RWPE1 (cell line): ENCODE measurements at regions of chr12 and their contacts with region 1.

Region 1: DNA sequence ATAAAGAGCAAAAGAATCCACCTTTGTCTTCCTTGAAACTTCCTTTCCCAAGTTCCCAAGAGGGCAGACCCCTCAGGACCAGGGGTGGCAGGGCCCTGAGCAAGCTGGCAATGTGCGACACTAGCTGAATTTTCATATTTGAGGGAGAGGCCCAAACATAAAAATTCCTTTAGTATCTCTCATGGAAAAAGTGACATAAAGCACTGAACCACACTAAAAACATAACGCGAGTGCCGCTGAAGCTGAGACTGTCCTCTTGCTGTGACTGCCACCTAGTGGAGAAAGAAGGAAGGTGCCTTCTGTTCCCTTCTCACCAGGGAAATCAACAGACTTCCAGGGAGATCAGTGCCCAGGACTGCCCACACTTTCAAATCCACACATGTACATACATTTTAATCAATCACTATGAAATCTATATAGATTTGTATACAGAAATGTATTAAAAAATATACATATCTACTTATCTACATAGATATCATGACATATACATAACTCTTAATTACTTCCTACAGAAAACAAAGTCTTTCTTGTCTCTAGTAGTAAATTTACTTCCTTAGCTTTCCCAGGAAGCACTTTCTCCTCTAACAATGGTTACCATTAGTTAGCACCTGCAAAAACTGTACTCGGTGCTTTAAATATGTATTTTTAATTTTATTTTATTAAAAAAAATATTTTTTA is 53.8 kb downstream of the SSH1 start:
- DNase-seq: peak; percentile 77
- H3K27ac ChIP-seq: peak overlapping the region; percentile 75; the same call in 1 of the 2 replicates
- CTCF ChIP-seq: peak; percentile 93

Region 2: DNA sequence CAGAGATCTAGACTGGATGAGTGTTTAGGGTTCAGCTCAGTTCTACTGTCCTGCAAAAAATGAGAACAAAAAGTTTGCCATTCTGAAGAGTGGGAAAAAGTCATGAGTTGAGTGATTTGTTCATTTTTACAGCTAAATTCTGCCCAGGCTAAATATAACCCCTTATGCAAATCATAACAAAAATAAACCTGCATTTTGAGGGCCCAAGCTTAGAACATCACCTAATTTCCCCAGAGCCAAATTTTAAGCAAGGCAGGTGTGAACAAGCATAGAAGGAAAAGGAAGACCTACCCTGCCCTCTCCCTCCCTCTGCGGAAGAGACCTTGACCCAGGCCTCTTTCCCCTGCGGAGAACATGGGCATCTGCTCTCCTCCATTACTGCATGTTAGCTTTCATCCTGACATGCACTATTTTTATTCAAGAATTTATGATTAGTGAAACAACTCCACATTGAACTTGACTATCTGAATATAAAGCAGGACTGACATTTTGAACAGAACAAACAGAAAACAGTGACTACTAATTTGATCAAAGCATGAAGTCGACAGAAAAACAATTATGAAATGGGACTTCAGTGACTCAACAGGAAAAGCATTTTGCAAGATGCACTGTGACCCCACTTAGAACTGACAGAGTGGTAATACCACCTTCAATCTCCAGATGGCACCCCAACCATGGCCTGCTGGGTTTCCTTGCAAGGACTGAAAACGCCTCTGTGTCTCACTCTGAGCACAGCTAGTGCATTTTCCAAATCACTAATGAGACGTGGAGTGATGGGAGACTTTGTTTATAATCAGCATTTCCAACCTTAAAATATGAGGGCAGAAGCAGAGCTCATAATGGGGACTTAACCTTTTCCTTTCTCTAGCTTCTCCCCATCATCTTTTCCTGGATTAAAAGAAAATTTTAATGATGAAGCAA is 139.0 kb before region 1 on chr12:
- CTCF ChIA-PET with region 1: interaction called, 18 read pairs
- POLR2A ChIA-PET with region 1: no interaction called
- DNase-seq: peak; percentile 86
- H3K27ac ChIP-seq: no peak overlapping the region
- CTCF ChIP-seq: peak; percentile 93

Region 3: DNA sequence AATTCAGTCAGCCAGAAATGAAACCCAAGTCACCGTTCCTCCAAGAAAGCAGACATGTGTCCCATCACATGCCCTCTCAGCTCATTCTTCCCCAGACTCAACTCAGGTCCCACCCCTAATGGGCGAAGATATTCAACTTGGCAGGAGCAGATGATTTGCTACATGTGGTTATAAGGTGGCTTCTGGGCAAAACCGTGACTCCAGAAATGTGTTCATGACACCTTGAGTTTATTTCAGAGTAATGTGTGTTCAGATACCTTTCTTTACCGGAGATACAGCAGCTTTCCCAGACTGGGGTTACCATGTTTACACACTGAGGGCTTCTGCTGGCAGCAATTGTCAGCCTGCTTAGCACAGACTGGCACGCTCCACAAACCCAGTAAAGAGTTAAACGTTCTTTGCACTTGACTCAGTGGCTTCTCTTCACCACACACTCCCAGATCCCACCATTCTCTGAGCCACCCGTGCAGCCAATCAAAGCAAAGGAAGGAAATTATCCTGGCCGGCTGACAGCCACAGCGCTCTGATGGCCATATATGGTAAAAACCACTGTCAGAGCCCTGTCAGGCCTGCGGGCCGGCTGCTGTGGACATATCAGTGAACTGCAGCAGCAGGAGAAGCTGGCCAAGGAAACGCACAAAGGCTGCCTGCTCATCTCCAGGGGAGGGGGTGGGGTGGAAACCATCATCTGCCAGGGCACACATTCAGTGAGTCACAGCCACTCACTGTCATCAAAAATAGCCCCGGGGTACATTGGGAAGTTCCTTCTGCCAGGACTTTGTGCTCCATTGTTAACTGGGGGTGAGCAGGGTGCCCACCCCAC is 112.2 kb before region 1 on chr12:
- CTCF ChIA-PET with region 1: interaction called, 18 read pairs
- POLR2A ChIA-PET with region 1: interaction called, 3 read pairs
- DNase-seq: peak; percentile 92
- H3K27ac ChIP-seq: peak overlapping the region; percentile 97
- CTCF ChIP-seq: no peak; the same call in 1 of the 2 replicates

Region 4: DNA sequence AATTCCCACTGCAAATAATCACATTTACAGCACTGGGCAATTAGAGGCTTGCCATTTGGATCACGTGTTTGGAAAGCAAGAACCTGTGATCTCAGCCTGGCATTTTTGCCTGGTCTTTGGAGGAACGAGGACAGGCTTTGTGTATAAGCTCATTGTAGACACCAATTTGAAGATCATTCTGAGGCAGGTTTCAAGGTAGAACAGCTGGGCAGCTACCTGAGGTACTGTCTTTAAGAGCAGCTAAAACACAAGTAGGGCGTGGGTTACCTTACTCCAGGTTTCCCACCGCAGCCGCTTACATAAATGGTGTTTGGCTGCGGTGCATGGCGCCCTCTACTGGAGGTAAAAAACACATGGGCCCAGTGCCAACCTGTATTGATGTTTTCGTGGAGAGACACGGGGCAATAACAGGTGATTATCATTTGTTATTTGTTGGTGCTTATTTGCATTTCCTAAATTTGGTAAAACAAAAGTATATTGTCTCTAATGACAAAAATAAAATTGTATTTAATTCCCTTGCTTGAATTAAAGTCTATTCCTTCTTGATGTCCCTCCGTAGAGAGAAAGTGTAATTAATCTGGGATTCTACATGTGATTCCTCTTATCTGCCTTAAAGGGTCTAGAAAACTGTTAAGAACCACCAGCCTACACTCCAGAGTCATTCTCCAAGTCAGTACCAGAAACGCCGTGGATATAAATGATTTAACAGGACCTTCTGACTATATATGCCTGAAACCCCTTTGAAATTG is 147.6 kb after region 1 on chr12:
- CTCF ChIA-PET with region 1: interaction called, 21 read pairs
- POLR2A ChIA-PET with region 1: no interaction called
- DNase-seq: peak; percentile 42
- H3K27ac ChIP-seq: no peak overlapping the region
- CTCF ChIP-seq: peak; percentile 86